ENCODE measurements at regions of chr19 and their contacts with region 1.

Region 1: DNA sequence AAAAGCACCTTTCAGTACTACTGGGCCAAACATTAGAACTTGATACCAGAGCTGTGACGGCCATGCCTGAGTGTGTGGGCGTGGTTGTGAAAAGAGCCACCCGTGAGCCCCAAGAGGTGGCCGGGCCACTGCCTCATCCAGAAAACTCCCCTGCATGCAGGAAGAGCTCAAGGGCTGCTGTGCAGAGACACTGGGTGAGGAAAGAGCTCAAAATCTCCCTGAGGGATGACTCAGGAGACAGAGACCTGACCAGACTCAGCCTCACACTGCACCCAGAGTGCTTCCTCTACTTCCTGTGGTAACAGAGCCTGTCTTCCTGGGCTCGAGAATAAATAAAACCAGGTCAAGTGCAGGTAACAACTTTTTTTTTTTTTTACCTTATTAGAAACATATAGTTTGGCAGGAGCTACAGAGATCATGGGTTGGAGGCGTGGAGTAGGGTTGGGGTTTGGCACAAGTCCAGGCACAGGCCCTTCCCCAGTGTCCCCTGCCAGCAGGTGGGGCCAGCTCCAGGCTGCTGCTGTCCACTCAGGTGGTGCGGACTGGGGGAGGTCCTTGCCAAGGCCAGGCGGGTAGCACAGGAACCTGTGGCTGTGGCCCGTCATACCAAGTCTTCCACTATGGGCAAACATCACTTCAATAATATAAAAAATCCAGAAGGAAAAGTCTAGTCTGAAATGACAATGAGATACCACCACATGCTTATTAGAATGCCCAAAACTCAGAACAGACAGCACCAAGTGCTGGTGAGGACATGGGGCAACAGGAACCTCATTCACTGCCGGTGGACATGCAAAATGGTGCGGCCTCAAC is 25.5 kb downstream of the ELL start:
- H3K4me3 ChIP-seq: no peak overlapping the region
- H3K27ac ChIP-seq: no peak overlapping the region
- H3K4me1 ChIP-seq: peaks cover 10% of the 10 kb centered on the region
- CTCF ChIP-seq: 0 out of 2 replicates have a peak, but pooled peaks have one; percentile 40

Region 2: GRCh38 chr19:18428787-18429674 is 67.3 kb before region 1 on chr19:
- CTCF ChIA-PET with region 1: no interaction called
- POLR2A ChIA-PET with region 1: no interaction called
- H3K4me3 ChIP-seq: peak overlapping the region; percentile 54
- H3K27ac ChIP-seq: peak overlapping the region; percentile 41; the same call in 1 of the 2 replicates
- H3K4me1 ChIP-seq: peaks cover 17% of the 10 kb centered on the region
- CTCF ChIP-seq: peak; percentile 64

Region 3: GRCh38 chr19:18450931-18451845 is 45.2 kb before region 1 on chr19:
- CTCF ChIA-PET with region 1: interaction called, 16 read pairs
- POLR2A ChIA-PET with region 1: no interaction called
- H3K4me3 ChIP-seq: no peak overlapping the region
- H3K27ac ChIP-seq: no peak overlapping the region
- H3K4me1 ChIP-seq: no peaks in the 10 kb centered on the region
- CTCF ChIP-seq: peak; percentile 95

Region 4: DNA sequence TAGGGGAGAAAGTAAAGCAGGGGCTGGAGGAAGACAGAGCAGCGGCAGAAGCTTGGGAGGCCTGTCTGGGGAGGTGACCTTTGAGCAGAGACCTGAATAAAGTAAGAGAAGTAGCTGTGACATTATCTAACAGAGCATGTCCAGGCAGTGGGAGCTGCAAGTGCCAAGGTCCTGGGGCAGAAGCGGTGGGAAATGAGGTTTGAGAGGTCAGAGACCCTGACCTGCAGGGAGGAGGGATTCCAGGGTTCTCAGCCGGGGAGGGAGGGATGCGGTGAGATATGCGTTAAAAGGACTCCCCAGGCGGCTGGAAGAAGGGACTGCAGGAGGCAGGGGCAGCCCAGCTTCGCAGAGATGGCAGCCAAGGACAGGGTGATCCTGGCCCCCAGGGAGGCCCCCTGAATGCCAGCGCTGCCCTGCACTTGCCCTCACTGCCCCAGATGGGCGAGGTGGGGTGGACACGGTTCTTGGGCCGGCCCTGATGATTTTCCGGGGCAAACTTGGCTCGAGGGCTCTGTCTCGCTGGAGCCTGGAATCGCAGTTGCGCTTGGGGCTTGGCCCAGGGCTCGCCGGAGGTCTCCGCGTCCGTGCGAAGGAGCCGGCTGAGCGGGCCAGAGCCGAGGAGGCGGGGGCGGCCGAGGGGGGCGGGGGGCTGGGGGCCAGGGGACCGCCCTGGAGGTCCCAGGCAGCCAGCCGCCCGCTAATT is 107.0 kb after region 1 on chr19:
- CTCF ChIA-PET with region 1: no interaction called
- POLR2A ChIA-PET with region 1: no interaction called
- H3K4me3 ChIP-seq: no peak overlapping the region
- H3K27ac ChIP-seq: no peak overlapping the region
- H3K4me1 ChIP-seq: no peaks in the 10 kb centered on the region; the same call in 1 of the 2 replicates
- CTCF ChIP-seq: no peak

Measured in HEK293 (cell line).